MCF 10A (cell line): ENCODE measurements at regions of chr1 and their contacts with region 1.

Region 1: GRCh38 chr1:179809506-179810366 is 66.6 kb downstream of the FAM163A start:
- DNase-seq: peak; percentile 82
- H3K4me3 Mint-ChIP-seq: no peak overlapping the region
- H3K27ac Mint-ChIP-seq: no peak overlapping the region
- H3K4me1 Mint-ChIP-seq: peaks cover 16% of the 10 kb centered on the region
- H3K27me3 Mint-ChIP-seq: peaks cover 42% of the 10 kb centered on the region
- CTCF ChIP-seq: peak; percentile 91

Region 2: GRCh38 chr1:179677898-179678297 is 131.8 kb before region 1 on chr1:
- CTCF ChIA-PET with region 1: interaction called, 14 read pairs
- POLR2A ChIA-PET with region 1: no interaction called
- intact Hi-C with region 1: no loop called
- DNase-seq: peak; percentile 10
- H3K4me3 Mint-ChIP-seq: no peak overlapping the region
- H3K27ac Mint-ChIP-seq: no peak overlapping the region
- H3K4me1 Mint-ChIP-seq: no peaks in the 10 kb centered on the region
- H3K27me3 Mint-ChIP-seq: peaks cover 65% of the 10 kb centered on the region
- CTCF ChIP-seq: no peak

Region 3: DNA sequence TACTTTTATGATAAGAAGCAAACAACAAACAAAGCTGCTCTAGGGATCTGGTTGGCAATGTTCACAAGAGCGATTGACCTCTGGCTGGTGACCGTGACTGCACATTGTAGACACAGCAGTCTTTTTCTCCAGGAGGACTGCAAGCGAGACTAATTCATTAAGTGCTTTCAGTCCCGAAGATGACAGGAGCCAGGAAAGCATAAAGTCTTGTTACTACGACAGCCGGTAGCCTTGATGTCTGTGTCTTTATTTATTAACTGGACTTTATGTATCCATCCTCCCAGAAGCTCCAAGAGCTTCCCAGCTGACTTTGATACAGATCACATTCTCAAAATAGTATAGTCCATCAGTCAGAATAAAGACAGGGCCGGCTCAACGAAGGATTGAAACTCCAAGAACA is 48.4 kb before region 1 on chr1:
- CTCF ChIA-PET with region 1: interaction called, 39 read pairs
- POLR2A ChIA-PET with region 1: no interaction called
- intact Hi-C with region 1: no loop called
- DNase-seq: no peak
- H3K4me3 Mint-ChIP-seq: no peak overlapping the region
- H3K27ac Mint-ChIP-seq: no peak overlapping the region
- H3K4me1 Mint-ChIP-seq: no peaks in the 10 kb centered on the region
- H3K27me3 Mint-ChIP-seq: peaks cover 16% of the 10 kb centered on the region
- CTCF ChIP-seq: no peak

Region 4: DNA sequence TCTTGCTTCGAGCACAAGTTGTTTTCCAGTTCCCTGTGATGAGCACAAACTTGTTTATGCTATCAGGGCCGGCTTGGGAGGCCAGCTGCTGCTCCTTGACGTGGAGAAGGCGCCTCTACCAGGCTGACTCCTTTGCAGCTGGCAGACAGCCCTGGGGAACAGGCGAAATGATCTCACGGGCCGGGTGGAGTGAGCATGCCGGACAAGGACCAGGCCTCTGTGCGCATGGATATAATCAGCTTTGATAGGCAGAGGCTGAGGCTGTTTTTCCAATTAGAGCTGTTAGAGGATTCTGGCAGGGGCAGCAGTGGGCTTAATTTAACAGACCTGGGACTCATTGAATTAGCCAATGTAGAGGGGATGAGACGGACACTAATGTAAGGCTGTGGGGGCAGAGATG is 27.8 kb before region 1 on chr1:
- CTCF ChIA-PET with region 1: interaction called, 36 read pairs
- POLR2A ChIA-PET with region 1: interaction called, 3 read pairs
- intact Hi-C with region 1: no loop called
- DNase-seq: no peak
- H3K4me3 Mint-ChIP-seq: no peak overlapping the region
- H3K27ac Mint-ChIP-seq: no peak overlapping the region
- H3K4me1 Mint-ChIP-seq: no peaks in the 10 kb centered on the region
- H3K27me3 Mint-ChIP-seq: no peaks in the 10 kb centered on the region
- CTCF ChIP-seq: no peak

Region 5: GRCh38 chr1:179831852-179832699 is 22.3 kb after region 1 on chr1:
- CTCF ChIA-PET with region 1: interaction called, 82 read pairs
- POLR2A ChIA-PET with region 1: no interaction called
- intact Hi-C with region 1: no loop called
- DNase-seq: no peak
- H3K4me3 Mint-ChIP-seq: no peak overlapping the region
- H3K27ac Mint-ChIP-seq: no peak overlapping the region
- H3K4me1 Mint-ChIP-seq: peaks cover 10% of the 10 kb centered on the region
- H3K27me3 Mint-ChIP-seq: no peaks in the 10 kb centered on the region
- CTCF ChIP-seq: no peak

Region 6: GRCh38 chr1:179867807-179868330 is 58.1 kb after region 1 on chr1:
- CTCF ChIA-PET with region 1: interaction called, 10 read pairs
- POLR2A ChIA-PET with region 1: no interaction called
- intact Hi-C with region 1: no loop called
- DNase-seq: peak; percentile 79
- H3K4me3 Mint-ChIP-seq: no peak overlapping the region
- H3K27ac Mint-ChIP-seq: no peak overlapping the region
- H3K4me1 Mint-ChIP-seq: peaks cover 34% of the 10 kb centered on the region
- H3K27me3 Mint-ChIP-seq: no peaks in the 10 kb centered on the region
- CTCF ChIP-seq: peak; percentile 81

Region 7: DNA sequence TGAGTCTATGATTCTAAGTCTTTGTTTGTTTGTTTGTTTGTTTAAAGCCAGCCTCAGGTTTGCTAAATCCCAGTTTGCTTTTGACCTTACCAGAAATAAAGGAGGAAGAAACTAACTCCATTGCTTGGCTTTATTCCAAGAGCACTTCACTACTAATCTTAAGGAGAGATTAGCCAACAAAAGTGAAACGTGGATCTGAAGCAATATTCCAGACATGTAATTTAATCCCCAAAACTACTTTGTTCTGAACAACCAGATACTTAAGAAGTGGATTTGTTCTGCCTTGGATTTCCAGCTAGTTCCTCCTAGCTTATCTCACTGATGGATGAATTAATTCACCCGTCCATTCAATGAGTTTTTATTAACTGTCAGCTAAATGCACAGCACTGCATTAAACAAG is 129.0 kb after region 1 on chr1:
- CTCF ChIA-PET with region 1: no interaction called
- POLR2A ChIA-PET with region 1: no interaction called
- intact Hi-C with region 1: no loop called
- DNase-seq: peak; percentile 73
- H3K4me3 Mint-ChIP-seq: no peak overlapping the region
- H3K27ac Mint-ChIP-seq: no peak overlapping the region
- H3K4me1 Mint-ChIP-seq: peaks cover 11% of the 10 kb centered on the region
- H3K27me3 Mint-ChIP-seq: no peaks in the 10 kb centered on the region
- CTCF ChIP-seq: no peak

Region 8: GRCh38 chr1:180003026-180003695 is 193.4 kb after region 1 on chr1:
- CTCF ChIA-PET with region 1: no interaction called
- POLR2A ChIA-PET with region 1: no interaction called
- intact Hi-C with region 1: no loop called
- DNase-seq: no peak
- H3K4me3 Mint-ChIP-seq: no peak overlapping the region
- H3K27ac Mint-ChIP-seq: no peak overlapping the region
- H3K4me1 Mint-ChIP-seq: peaks cover 6% of the 10 kb centered on the region
- H3K27me3 Mint-ChIP-seq: no peaks in the 10 kb centered on the region
- CTCF ChIP-seq: no peak

Region 9: GRCh38 chr1:180020017-180020416 is 210.3 kb after region 1 on chr1:
- CTCF ChIA-PET with region 1: no interaction called
- POLR2A ChIA-PET with region 1: no interaction called
- intact Hi-C with region 1: no loop called
- DNase-seq: no peak
- H3K4me3 Mint-ChIP-seq: no peak overlapping the region
- H3K27ac Mint-ChIP-seq: no peak overlapping the region
- H3K4me1 Mint-ChIP-seq: no peaks in the 10 kb centered on the region
- H3K27me3 Mint-ChIP-seq: no peaks in the 10 kb centered on the region
- CTCF ChIP-seq: no peak